ENCODE measurements at regions of chr1 and their contacts with region 1.

Region 1: DNA sequence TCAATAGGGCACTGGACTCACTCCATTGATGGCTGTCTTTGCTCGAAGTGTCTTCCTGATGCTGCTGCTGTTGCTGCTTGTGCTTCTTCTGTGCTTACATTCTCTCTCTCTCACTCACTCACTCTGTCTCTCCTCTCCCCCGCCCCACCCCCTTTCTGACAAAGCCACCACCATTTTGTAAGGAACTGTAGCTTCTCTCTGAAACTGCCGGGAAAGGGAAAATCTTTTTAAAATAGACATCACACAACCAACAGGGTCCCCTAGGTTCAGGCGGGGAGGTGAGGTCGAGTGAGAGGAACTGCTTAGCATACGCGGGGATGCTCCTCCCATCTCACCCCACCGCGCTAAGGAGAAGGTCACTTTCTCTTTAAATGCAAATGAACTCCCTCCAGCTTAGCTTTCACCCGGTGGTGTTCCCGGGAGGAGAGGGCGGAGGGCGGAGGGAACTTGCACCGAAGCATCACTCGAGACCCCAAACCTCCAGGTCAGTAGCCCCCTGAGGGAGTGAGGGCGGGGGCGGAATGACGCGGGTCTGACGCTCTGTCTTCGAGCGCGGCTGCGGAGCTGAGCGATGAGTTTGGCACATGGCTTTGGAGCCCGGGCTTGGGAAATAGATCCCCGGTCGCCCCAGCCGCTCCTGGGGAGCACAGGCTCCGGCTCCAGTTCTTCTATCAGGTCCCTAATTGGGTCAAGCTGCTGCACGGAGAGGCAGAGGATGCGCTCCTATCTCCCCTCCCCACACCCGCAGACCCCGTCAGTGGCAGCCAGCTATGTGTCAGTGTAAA is at the start of gene CCDC28B:
- DNase-seq: peak in 1 of 2 experiments; percentile 82
- H3K4me3 ChIP-seq: peak within 1 kb of the TSS; percentile 47 to 67 (median 62)
- H3K27ac ChIP-seq: peak within 1 kb of the TSS; percentile 5; the same call in 1 of the 2 replicates
- H3K4me1 ChIP-seq: peaks cover 13 to 31% (median 20%) of the 10 kb centered on the region in 4 experiments
- H3K27me3 ChIP-seq: peaks cover 0 to 4% (median 2%) of the 10 kb centered on the region in 4 experiments; a peak in 3 of 7 replicates
- CTCF ChIP-seq: no peak
- EP300 ChIP-seq: no peak
- POLR2A ChIP-seq: no peak
- RAD21 ChIP-seq: no peak
- total RNA-seq, gene CCDC28B: 17.1 and 20.9 TPM in 2 replicates

Region 2: DNA sequence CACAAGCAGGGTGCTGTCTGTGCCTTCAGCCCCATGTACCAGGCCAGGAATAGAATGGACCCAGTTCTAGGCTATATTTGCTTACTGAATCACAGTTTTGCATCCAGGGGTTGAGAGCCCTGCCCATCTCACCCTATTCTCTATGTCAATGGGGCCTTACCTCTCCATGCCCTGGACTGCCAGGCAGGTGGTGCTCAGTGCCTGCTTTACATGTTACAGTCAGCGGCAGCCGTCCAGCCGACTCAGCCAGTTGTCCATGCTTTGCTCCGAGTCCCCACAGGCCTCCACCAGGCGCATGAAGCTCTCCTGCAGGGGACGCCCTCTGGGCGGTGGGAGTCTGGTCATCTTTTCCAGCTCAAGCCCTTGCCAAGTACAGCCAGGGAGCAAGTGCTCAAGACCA is 34.4 kb after region 1 on chr1:
- CTCF ChIA-PET with region 1: interaction called, 3 read pairs
- POLR2A ChIA-PET with region 1: interaction called, 32 read pairs
- DNase-seq: no peak
- H3K4me3 ChIP-seq: no peak overlapping the region
- H3K27ac ChIP-seq: no peak overlapping the region
- H3K4me1 ChIP-seq: peaks cover 0 to 2% (median 0%) of the 10 kb centered on the region in 4 experiments; a peak in 1 of 7 replicates
- H3K27me3 ChIP-seq: no peaks in the 10 kb centered on the region
- CTCF ChIP-seq: no peak
- EP300 ChIP-seq: no peak
- POLR2A ChIP-seq: no peak
- RAD21 ChIP-seq: peak in 1 of 2 experiments; percentile 23; a peak in 1 of 4 replicates